CD4-positive, alpha-beta T cell (primary cell): ENCODE measurements at regions of chr16 and their contacts with region 1.

Region 1: GRCh38 chr16:78134929-78135619 is 35.6 kb downstream of the WWOX start:
- DNase-seq: peak in 1 of 14 experiments; percentile 41
- ATAC-seq: no peak
- H3K4me3 ChIP-seq: no peak overlapping the region
- H3K4me3 Mint-ChIP-seq: no peak overlapping the region
- H3K27ac ChIP-seq: no peak overlapping the region
- H3K27ac Mint-ChIP-seq: no peak overlapping the region
- H3K4me1 ChIP-seq: no peaks in the 10 kb centered on the region
- H3K4me1 Mint-ChIP-seq: peaks cover 8% of the 10 kb centered on the region
- H3K27me3 ChIP-seq: no peaks in the 10 kb centered on the region
- H3K27me3 Mint-ChIP-seq: no peaks in the 10 kb centered on the region
- CTCF ChIP-seq: no peak

Region 2: GRCh38 chr16:78002915-78003538 is 132.0 kb before region 1 on chr16:
- CTCF ChIA-PET with region 1: no interaction called
- POLR2A ChIA-PET with region 1: no interaction called
- intact Hi-C with region 1: no loop called
- DNase-seq: peak; percentile 24 to 78 (median 45)
- ATAC-seq: peak; percentile 67
- H3K4me3 ChIP-seq: no peak overlapping the region
- H3K4me3 Mint-ChIP-seq: no peak overlapping the region
- H3K27ac ChIP-seq: no peak overlapping the region
- H3K27ac Mint-ChIP-seq: no peak overlapping the region
- H3K4me1 ChIP-seq: peaks cover 4% of the 10 kb centered on the region
- H3K4me1 Mint-ChIP-seq: no peaks in the 10 kb centered on the region
- H3K27me3 ChIP-seq: peaks cover 6 to 11% of the 10 kb centered on the region in 2 experiments
- H3K27me3 Mint-ChIP-seq: peaks cover 30% of the 10 kb centered on the region
- CTCF ChIP-seq: peak; percentile 77

Region 3: DNA sequence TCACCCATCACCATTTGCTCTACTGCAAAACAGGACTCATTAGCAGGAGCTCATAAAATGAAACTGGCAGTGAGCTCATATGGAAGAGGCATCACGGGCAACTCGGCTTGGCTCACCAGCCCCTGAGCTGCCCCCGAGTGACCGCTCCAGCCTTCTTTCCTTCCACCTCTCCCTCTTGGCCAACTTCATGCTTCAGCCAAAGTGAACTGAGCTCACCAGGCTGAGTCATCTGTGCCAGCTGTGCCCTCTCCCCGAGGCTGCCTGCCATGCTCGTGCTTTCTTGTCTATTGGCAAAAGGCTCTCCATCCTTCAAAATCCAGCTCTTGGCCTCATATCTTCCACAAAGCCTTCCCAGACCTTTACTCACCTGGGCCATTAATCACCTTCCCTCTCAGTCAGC is 355.8 kb after region 1 on chr16:
- CTCF ChIA-PET with region 1: no interaction called
- POLR2A ChIA-PET with region 1: no interaction called
- intact Hi-C with region 1: loop called in 1 of 2 experiments (anchors 10 kb)
- DNase-seq: no peak
- ATAC-seq: no peak
- H3K4me3 ChIP-seq: no peak overlapping the region
- H3K4me3 Mint-ChIP-seq: no peak overlapping the region
- H3K27ac ChIP-seq: no peak overlapping the region
- H3K27ac Mint-ChIP-seq: no peak overlapping the region
- H3K4me1 ChIP-seq: no peaks in the 10 kb centered on the region
- H3K4me1 Mint-ChIP-seq: no peaks in the 10 kb centered on the region
- H3K27me3 ChIP-seq: no peaks in the 10 kb centered on the region
- H3K27me3 Mint-ChIP-seq: no peaks in the 10 kb centered on the region
- CTCF ChIP-seq: no peak

Region 4: DNA sequence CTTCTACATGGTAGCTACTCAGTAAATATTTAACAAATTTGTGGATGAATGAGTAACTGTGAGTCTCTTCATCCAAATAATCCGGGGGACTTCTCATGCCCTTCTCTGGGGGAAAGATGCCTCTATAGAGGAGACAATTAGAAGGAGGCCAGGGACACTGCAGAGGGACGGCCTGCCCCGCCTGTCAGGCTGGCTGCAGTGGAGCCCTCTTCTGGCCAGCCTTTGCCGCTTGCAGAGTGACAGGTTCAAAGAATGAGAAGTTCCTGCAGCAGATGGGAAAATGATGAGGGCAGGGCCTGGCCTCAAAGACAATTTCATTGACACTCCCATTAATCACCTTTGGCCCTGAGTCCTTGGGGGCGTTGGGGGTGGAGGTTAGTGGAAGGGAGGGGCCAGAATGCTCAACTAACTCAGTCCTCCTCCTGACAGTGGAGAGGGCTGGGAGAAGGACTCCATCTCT is 1126.4 kb after region 1 on chr16:
- CTCF ChIA-PET with region 1: no interaction called
- POLR2A ChIA-PET with region 1: no interaction called
- intact Hi-C with region 1: no loop called
- DNase-seq: peak in 12 of 14 experiments; percentile 11 to 65 (median 40)
- ATAC-seq: no peak
- H3K4me3 ChIP-seq: no peak overlapping the region
- H3K4me3 Mint-ChIP-seq: no peak overlapping the region
- H3K27ac ChIP-seq: no peak overlapping the region
- H3K27ac Mint-ChIP-seq: no peak overlapping the region
- H3K4me1 ChIP-seq: peaks cover 8% of the 10 kb centered on the region
- H3K4me1 Mint-ChIP-seq: peaks cover 1% of the 10 kb centered on the region
- H3K27me3 ChIP-seq: no peaks in the 10 kb centered on the region
- H3K27me3 Mint-ChIP-seq: peaks cover 34% of the 10 kb centered on the region
- CTCF ChIP-seq: peak; percentile 22